ENCODE measurements at regions of chr15 and their contacts with region 1.

Region 1: GRCh38 chr15:40405501-40406381 is at the start of gene IVD:
- DNase-seq: peak; percentile 87 to 93 (median 88)
- H3K4me3 ChIP-seq: peak within 1 kb of the TSS; percentile 85
- H3K4me3 Mint-ChIP-seq: peak within 1 kb of the TSS; percentile 86 to 96 (median 91)
- H3K27ac ChIP-seq: peak within 1 kb of the TSS; percentile 57
- H3K27ac Mint-ChIP-seq: peak within 1 kb of the TSS; percentile 68 to 93 (median 88)
- H3K4me1 ChIP-seq: peaks cover 24% of the 10 kb centered on the region
- H3K4me1 Mint-ChIP-seq: peaks cover 31 to 54% (median 45%) of the 10 kb centered on the region in 3 donors
- H3K27me3 ChIP-seq: no peaks in the 10 kb centered on the region
- H3K27me3 Mint-ChIP-seq: no peaks in the 10 kb centered on the region
- total RNA-seq, gene IVD: 68.5 to 80.1 TPM

Region 2: GRCh38 chr15:40330368-40330836 is 75.3 kb before region 1 on chr15:
- CTCF ChIA-PET with region 1: no interaction called
- POLR2A ChIA-PET with region 1: no interaction called
- DNase-seq: no peak
- H3K4me3 ChIP-seq: no peak overlapping the region
- H3K4me3 Mint-ChIP-seq: no peak overlapping the region
- H3K27ac ChIP-seq: peak overlapping the region; percentile 27
- H3K27ac Mint-ChIP-seq: no peak overlapping the region
- H3K4me1 ChIP-seq: peaks cover 17% of the 10 kb centered on the region
- H3K4me1 Mint-ChIP-seq: peaks cover 6 to 16% (median 6%) of the 10 kb centered on the region in 3 donors
- H3K27me3 ChIP-seq: no peaks in the 10 kb centered on the region
- H3K27me3 Mint-ChIP-seq: no peaks in the 10 kb centered on the region

Region 3: GRCh38 chr15:40382580-40383456 is 22.9 kb before region 1 on chr15 and contains the start of gene KNSTRN:
- CTCF ChIA-PET with region 1: interaction called, 6 read pairs
- POLR2A ChIA-PET with region 1: interaction called, 10 read pairs
- DNase-seq: peak; percentile 84 to 94 (median 87)
- H3K4me3 ChIP-seq: peak within 1 kb of the TSS; percentile 88
- H3K4me3 Mint-ChIP-seq: peak within 1 kb of the TSS; percentile 90 to 99 (median 97)
- H3K27ac ChIP-seq: peak within 1 kb of the TSS; percentile 62
- H3K27ac Mint-ChIP-seq: peak within 1 kb of the TSS in 7 of 8 donors; percentile 15 to 98 (median 92)
- H3K4me1 ChIP-seq: peaks cover 13% of the 10 kb centered on the region
- H3K4me1 Mint-ChIP-seq: peaks cover 14 to 27% (median 26%) of the 10 kb centered on the region in 3 donors
- H3K27me3 ChIP-seq: no peaks in the 10 kb centered on the region
- H3K27me3 Mint-ChIP-seq: no peaks in the 10 kb centered on the region
- total RNA-seq, gene KNSTRN: 42.8 to 49.9 TPM

Region 4: GRCh38 chr15:40525855-40526254 is 120.1 kb after region 1 on chr15:
- CTCF ChIA-PET with region 1: no interaction called
- POLR2A ChIA-PET with region 1: no interaction called
- DNase-seq: no peak
- H3K4me3 ChIP-seq: no peak overlapping the region
- H3K4me3 Mint-ChIP-seq: no peak overlapping the region
- H3K27ac ChIP-seq: no peak overlapping the region
- H3K27ac Mint-ChIP-seq: peak overlapping the region in 1 of 8 donors; percentile 87
- H3K4me1 ChIP-seq: no peaks in the 10 kb centered on the region
- H3K4me1 Mint-ChIP-seq: no peaks in the 10 kb centered on the region
- H3K27me3 ChIP-seq: no peaks in the 10 kb centered on the region
- H3K27me3 Mint-ChIP-seq: no peaks in the 10 kb centered on the region

Region 5: GRCh38 chr15:40550341-40551037 is 144.7 kb after region 1 on chr15:
- CTCF ChIA-PET with region 1: no interaction called
- POLR2A ChIA-PET with region 1: no interaction called
- DNase-seq: no peak
- H3K4me3 ChIP-seq: no peak overlapping the region
- H3K4me3 Mint-ChIP-seq: no peak overlapping the region
- H3K27ac ChIP-seq: no peak overlapping the region
- H3K27ac Mint-ChIP-seq: peak overlapping the region in 1 of 8 donors; percentile 68
- H3K4me1 ChIP-seq: no peaks in the 10 kb centered on the region
- H3K4me1 Mint-ChIP-seq: peaks cover 0 to 4% (median 0%) of the 10 kb centered on the region in 3 donors
- H3K27me3 ChIP-seq: no peaks in the 10 kb centered on the region
- H3K27me3 Mint-ChIP-seq: no peaks in the 10 kb centered on the region